ENCODE measurements at regions of chr7 and their contacts with region 1.

Region 1: DNA sequence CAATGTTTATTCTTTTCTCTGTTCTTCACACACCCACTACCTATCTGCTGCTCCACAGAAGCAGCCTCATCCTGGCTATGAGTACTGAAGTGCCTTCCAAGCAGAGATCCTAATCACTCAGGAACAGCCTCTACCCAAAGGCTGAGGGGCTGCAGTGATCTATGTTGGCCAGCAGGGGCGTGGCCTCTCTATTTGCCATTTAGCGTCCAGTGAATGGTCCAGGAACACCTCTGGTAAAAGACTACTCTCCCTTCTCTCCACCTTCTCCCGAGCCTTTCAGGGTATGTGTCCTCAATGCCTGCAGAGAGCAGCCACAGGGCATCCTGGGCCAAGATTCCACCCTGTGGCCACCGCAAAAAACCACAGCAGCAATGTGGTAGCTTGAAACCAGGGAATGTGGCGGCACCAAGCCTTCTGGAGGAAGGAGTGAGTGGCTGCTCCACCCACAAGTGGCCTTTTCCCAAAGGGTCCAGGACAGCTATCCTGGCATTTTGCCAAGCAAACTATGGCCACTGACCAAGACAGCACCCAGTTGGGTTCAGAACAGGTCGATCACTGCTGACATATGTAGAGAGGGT is 70.9 kb downstream of the SYPL1 start:
- DNase-seq: peak; percentile 56 to 61
- H3K4me3 ChIP-seq: no peak overlapping the region
- H3K4me3 Mint-ChIP-seq: no peak overlapping the region
- H3K27ac Mint-ChIP-seq: no peak overlapping the region
- H3K4me1 ChIP-seq: no peaks in the 10 kb centered on the region
- H3K4me1 Mint-ChIP-seq: peaks cover 6% of the 10 kb centered on the region
- H3K27me3 ChIP-seq: no peaks in the 10 kb centered on the region
- H3K27me3 Mint-ChIP-seq: peaks cover 9% of the 10 kb centered on the region
- CTCF ChIP-seq: peak; percentile 79 to 87

Region 2: GRCh38 chr7:105713488-105714465 is 327.5 kb before region 1 on chr7:
- CTCF ChIA-PET with region 1: no interaction called
- POLR2A ChIA-PET with region 1: no interaction called
- intact Hi-C with region 1: no loop called
- DNase-seq: no peak
- H3K4me3 ChIP-seq: no peak overlapping the region
- H3K4me3 Mint-ChIP-seq: no peak overlapping the region
- H3K27ac Mint-ChIP-seq: no peak overlapping the region
- H3K4me1 ChIP-seq: no peaks in the 10 kb centered on the region
- H3K4me1 Mint-ChIP-seq: peaks cover 5% of the 10 kb centered on the region
- H3K27me3 ChIP-seq: no peaks in the 10 kb centered on the region
- H3K27me3 Mint-ChIP-seq: no peaks in the 10 kb centered on the region
- CTCF ChIP-seq: no peak

Region 3: DNA sequence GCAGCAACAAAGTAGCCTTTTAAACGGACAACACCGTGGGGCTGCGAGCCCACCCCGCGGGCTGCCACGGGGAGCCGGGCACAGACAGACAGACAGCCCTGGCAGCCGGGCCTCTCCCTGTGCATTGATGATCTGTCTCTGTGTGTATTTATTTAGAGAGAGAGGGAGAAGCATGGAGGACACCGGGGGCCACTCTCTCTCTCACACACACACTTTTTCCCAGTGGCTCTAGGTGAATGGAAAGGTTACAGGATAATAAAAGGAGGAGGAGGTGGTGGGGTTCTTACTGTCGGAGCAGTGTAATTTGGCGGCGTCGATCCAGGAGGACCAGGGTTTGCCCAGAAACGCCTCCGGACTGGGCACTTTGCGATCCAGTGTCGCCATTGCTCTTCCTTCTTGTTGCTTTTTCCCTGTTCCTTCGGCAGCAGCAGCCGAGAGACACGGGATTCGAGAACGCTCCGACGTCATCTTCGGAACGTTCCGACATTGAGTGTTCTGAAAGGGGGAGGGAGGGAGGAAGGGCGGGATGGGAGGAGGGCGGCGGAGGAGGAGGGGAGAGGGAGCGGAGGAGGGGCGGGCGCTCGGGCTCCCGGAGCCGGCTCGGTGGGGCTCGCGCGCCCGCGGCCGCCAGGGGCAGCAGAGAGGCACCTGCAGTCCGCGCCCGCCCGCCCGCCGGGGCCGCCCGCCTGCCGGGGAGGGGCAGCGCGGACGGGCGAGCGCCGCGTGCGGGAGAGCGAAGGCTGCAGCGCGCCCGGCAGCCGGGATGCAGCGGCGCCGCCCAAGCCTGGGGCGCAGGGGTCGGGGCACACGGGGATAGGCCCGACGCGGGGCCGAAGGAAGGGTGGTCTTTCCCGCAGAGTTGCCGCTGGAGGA is 164.9 kb before region 1 on chr7 and contains the start of gene ATXN7L1:
- CTCF ChIA-PET with region 1: no interaction called
- POLR2A ChIA-PET with region 1: no interaction called
- intact Hi-C with region 1: loop called (anchors 2 kb)
- DNase-seq: peak; percentile 97
- H3K4me3 ChIP-seq: peak within 1 kb of the TSS; percentile 95
- H3K4me3 Mint-ChIP-seq: peak within 1 kb of the TSS; percentile 97
- H3K27ac Mint-ChIP-seq: peak within 1 kb of the TSS; percentile 99
- H3K4me1 ChIP-seq: peaks cover 9% of the 10 kb centered on the region; the same call in 1 of the 2 replicates
- H3K4me1 Mint-ChIP-seq: peaks cover 15% of the 10 kb centered on the region
- H3K27me3 ChIP-seq: no peaks in the 10 kb centered on the region
- H3K27me3 Mint-ChIP-seq: no peaks in the 10 kb centered on the region
- CTCF ChIP-seq: peak; percentile 9 to 63
- total RNA-seq, gene ATXN7L1: 14.1 and 18.2 TPM in 2 replicates

Region 4: GRCh38 chr7:105934572-105935185 is 106.5 kb before region 1 on chr7:
- CTCF ChIA-PET with region 1: interaction called, 23 read pairs
- POLR2A ChIA-PET with region 1: no interaction called
- intact Hi-C with region 1: loop called (anchors 1 kb)
- DNase-seq: peak; percentile 50 to 59
- H3K4me3 ChIP-seq: no peak overlapping the region
- H3K4me3 Mint-ChIP-seq: no peak overlapping the region
- H3K27ac Mint-ChIP-seq: no peak overlapping the region
- H3K4me1 ChIP-seq: no peaks in the 10 kb centered on the region
- H3K4me1 Mint-ChIP-seq: peaks cover 1% of the 10 kb centered on the region
- H3K27me3 ChIP-seq: no peaks in the 10 kb centered on the region
- H3K27me3 Mint-ChIP-seq: no peaks in the 10 kb centered on the region
- CTCF ChIP-seq: peak; percentile 38 to 68

Region 5: DNA sequence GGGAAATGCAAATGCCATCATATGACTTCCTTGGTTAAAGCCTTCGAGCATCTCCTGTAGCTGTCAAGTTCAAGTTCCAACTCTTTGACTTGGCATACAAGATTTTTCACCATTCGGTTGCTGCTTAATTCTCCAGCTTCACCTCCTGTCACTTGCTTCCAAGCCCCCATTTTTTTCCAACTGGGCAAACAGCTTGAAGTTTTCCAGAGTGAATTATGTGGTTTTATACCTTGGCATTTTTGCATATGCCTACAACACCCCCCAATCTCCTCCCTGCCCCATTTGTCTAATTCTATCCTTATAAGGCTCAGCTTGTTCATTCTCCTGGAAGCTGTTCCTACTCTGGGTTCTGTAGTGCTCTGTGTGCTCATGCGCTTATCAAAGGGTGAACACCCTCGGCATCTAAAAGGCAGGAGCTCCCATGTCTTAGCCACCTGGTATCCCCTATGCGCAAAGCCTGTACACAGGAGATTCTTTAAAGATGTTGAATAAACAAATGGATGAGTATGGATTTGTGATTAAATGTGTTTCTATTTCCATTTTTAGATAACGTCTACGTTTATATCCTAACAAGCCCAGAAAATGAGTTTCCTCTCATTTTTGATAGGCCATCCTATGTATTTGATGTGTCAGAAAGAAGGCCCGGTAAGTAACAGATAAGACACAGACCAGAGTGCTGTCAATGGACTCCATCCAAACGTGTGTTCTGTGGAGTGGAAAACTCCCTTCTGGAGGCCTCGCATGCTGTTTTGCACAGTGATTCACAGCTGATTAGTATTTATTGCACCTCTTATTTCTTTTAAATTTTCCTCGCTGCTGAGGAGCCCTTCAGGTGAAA is 25.6 kb before region 1 on chr7:
- CTCF ChIA-PET with region 1: no interaction called
- POLR2A ChIA-PET with region 1: no interaction called
- intact Hi-C with region 1: no loop called
- DNase-seq: no peak
- H3K4me3 ChIP-seq: no peak overlapping the region
- H3K4me3 Mint-ChIP-seq: no peak overlapping the region
- H3K27ac Mint-ChIP-seq: no peak overlapping the region
- H3K4me1 ChIP-seq: no peaks in the 10 kb centered on the region
- H3K4me1 Mint-ChIP-seq: peaks cover 9% of the 10 kb centered on the region
- H3K27me3 ChIP-seq: no peaks in the 10 kb centered on the region
- H3K27me3 Mint-ChIP-seq: peaks cover 3% of the 10 kb centered on the region
- CTCF ChIP-seq: no peak

Region 6: DNA sequence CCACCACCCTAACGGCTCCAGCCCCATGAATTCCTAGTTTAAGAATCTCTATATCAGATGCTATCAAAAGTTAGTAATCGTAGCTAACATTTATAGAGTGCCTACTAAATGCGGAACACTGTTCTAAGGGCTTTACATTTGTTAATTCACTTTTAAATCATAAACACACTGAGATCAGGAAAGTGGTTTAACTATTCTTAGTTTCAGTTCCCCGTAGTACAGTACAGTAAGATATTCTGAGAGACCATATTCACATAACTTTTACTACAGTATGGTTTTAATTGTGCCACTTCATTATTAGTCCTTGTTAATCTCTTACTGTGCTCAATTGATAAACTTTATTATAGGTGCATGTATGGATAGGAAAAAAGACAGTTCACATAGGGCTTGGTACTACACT is 48.4 kb after region 1 on chr7:
- CTCF ChIA-PET with region 1: no interaction called
- POLR2A ChIA-PET with region 1: no interaction called
- intact Hi-C with region 1: no loop called
- DNase-seq: no peak
- H3K4me3 ChIP-seq: no peak overlapping the region
- H3K4me3 Mint-ChIP-seq: no peak overlapping the region
- H3K27ac Mint-ChIP-seq: no peak overlapping the region
- H3K4me1 ChIP-seq: no peaks in the 10 kb centered on the region
- H3K4me1 Mint-ChIP-seq: no peaks in the 10 kb centered on the region
- H3K27me3 ChIP-seq: no peaks in the 10 kb centered on the region
- H3K27me3 Mint-ChIP-seq: no peaks in the 10 kb centered on the region
- CTCF ChIP-seq: no peak